ENCODE measurements at regions of chr6 and their contacts with region 1.

Region 1: DNA sequence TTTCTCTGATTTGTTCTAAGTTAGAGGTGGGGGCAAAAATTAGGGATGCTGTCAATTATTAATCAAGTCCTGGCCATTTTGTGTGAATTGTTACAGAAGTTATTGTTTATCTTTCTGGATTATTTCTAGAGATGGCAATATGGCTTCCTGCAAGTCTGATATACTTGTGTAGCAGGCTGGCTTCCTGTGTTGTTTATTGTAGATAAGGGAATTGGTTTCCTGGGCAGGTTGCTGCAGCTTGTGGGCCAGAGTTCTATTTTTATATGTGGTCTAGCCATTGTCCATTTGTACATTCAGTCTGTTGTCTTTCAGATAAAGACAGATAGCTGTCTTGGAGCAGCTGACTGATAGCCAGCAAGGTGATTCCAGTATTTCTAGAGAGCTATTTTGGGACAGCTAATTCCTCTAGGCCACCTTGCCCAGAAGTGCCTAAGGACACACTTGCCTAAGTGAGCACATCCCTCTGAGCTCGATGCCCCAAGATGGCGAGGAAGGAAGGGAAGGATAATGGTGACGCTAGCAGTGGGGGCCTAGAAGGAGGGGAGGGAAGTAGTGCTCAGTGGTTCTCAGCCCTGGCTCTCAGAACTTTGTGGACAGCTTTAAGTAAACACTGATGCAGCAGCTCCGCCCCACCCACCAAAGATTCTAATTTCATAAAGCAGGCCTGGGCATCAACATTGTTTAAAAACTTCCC is 25.5 kb downstream of the DDO start:
- DNase-seq: peak; percentile 74
- H3K4me3 ChIP-seq: no peak overlapping the region
- H3K27ac ChIP-seq: peak overlapping the region; percentile 54
- H3K4me1 ChIP-seq: peaks cover 17% of the 10 kb centered on the region
- H3K27me3 ChIP-seq: peaks cover 10 to 16% of the 10 kb centered on the region in 2 experiments
- CTCF ChIP-seq: no peak
- POLR2A ChIP-seq: no peak

Region 2: DNA sequence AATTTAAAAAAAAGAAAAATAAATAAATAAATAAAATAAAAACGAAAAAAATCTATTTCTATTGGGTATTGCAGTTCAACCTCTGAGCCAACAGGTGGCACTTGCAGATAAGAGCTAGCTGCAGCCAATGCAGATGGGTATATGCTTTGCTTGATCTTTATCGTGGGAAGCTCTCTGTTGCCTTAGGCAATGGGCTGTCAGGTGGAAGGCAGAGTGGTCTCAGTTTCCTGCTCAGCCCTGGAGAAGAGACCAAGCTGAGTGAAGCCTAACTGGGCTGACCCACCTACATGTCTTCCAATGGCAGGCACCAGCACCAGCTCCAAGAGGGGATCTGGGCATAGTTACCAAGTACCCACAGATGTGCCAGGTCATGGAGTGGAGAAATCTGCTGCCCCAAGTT is 793.8 kb before region 1 on chr6:
- CTCF ChIA-PET with region 1: interaction called, 11 read pairs
- POLR2A ChIA-PET with region 1: no interaction called
- dilution Hi-C with region 1: no loop called
- intact Hi-C with region 1: loop called (anchors 2 kb)
- DNase-seq: peak; percentile 50
- H3K4me3 ChIP-seq: no peak overlapping the region
- H3K27ac ChIP-seq: no peak overlapping the region
- H3K4me1 ChIP-seq: no peaks in the 10 kb centered on the region
- H3K27me3 ChIP-seq: no peaks in the 10 kb centered on the region
- CTCF ChIP-seq: peak in 1 of 2 donors; percentile 51
- POLR2A ChIP-seq: no peak

Region 3: DNA sequence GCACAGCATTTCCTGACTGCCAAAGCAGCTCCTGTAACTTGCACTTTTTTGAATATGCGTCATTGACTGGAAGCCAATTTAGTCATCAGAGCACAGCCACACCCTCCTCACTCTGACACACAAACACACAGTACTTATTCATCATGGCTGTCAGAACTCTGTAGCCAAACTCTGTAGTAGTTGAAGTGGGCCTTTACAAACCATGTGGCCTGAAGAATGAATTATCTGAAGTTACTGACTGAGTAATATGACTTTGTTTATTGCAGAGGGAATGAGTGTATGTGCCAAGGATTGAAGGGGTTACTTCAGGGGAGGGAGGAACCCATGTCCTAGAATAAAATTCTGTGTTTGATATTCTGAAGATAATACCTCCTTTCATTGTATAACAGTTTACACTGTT is 596.0 kb before region 1 on chr6:
- CTCF ChIA-PET with region 1: no interaction called
- POLR2A ChIA-PET with region 1: no interaction called
- dilution Hi-C with region 1: no loop called
- intact Hi-C with region 1: loop called (anchors 1 kb)
- DNase-seq: peak; percentile 93
- H3K4me3 ChIP-seq: no peak overlapping the region
- H3K27ac ChIP-seq: peak overlapping the region; percentile 75
- H3K4me1 ChIP-seq: peaks cover 38% of the 10 kb centered on the region
- H3K27me3 ChIP-seq: no peaks in the 10 kb centered on the region
- CTCF ChIP-seq: no peak
- POLR2A ChIP-seq: no peak

Region 4: DNA sequence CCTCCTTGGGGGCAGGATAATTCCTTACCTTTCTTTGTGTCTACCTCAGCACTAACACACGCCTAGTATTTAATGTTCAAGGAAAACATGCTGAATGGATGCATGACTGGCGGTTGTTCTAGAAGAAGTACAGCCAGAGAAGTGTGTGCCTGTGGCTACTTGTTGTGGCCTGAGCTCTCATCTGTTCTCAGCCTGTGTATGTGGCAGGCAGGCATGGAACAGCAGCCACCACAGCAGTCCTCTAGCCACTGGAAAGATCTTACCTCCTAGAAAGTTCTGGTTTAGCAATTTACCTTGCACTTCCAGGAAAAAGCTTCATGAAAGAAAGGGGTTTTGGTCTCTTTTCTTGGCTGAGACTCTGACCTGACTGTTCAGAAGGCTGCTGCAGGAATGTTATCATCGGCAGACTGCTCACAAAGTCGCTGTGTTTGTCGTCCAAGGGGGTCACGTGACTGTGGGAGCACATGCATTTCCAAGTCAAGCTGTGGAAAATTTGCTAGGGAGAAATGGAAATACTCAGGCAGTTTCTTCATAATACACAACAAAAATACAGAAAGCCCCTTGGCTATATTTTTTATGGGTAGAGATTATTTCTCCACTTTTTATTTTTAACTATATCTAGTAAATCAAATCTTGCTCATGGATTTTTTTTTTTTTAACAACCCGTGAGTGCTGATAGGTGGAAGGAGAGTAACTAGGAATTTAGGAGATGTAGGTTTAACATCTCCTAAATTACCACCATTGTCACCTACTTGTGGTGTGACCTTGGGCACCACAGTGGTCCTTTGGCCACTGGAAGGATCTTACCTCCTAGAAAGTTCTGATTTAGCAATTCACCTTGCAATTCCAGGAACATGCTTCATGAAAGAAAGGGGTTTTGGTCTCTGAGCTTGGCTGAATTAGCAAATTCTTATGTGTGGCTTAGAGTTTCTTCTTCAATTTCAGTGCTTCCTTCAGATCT is 522.5 kb before region 1 on chr6:
- CTCF ChIA-PET with region 1: no interaction called
- POLR2A ChIA-PET with region 1: no interaction called
- dilution Hi-C with region 1: no loop called
- intact Hi-C with region 1: no loop called
- DNase-seq: peak; percentile 5
- H3K4me3 ChIP-seq: no peak overlapping the region
- H3K27ac ChIP-seq: no peak overlapping the region
- H3K4me1 ChIP-seq: no peaks in the 10 kb centered on the region
- H3K27me3 ChIP-seq: peaks cover 4 to 5% of the 10 kb centered on the region in 2 experiments
- CTCF ChIP-seq: no peak
- POLR2A ChIP-seq: no peak

Region 5: GRCh38 chr6:109944448-109944847 is 445.4 kb before region 1 on chr6:
- CTCF ChIA-PET with region 1: no interaction called
- POLR2A ChIA-PET with region 1: no interaction called
- dilution Hi-C with region 1: no loop called
- intact Hi-C with region 1: no loop called
- DNase-seq: no peak
- H3K4me3 ChIP-seq: no peak overlapping the region
- H3K27ac ChIP-seq: no peak overlapping the region
- H3K4me1 ChIP-seq: no peaks in the 10 kb centered on the region
- H3K27me3 ChIP-seq: peaks cover 2 to 5% of the 10 kb centered on the region in 2 experiments
- CTCF ChIP-seq: no peak
- POLR2A ChIP-seq: no peak

Region 6: DNA sequence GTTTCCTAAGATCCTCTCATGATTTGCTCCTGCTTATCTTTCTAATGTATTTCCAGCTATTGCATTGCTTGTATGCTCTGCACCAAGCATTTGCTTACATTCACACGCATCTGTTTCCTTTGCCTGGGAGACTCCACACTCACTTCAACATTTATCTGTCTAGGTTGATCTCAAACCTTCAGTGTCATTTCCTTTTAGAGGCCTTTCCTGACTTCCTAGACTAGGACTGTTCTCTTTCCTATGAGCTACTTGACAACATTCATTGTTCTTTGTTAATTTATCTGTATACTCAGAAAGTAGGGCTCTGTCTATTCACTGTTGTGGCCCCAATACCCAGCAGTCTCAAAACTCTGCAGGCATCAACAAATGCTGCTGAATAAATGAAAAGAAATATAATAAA is 294.7 kb before region 1 on chr6:
- CTCF ChIA-PET with region 1: interaction called, 3 read pairs
- POLR2A ChIA-PET with region 1: no interaction called
- dilution Hi-C with region 1: no loop called
- intact Hi-C with region 1: loop called (anchors 1 kb)
- DNase-seq: peak; percentile 93
- H3K4me3 ChIP-seq: no peak overlapping the region
- H3K27ac ChIP-seq: peak overlapping the region; percentile 80
- H3K4me1 ChIP-seq: peaks cover 36% of the 10 kb centered on the region
- H3K27me3 ChIP-seq: no peaks in the 10 kb centered on the region
- CTCF ChIP-seq: no peak
- POLR2A ChIP-seq: no peak

Region 7: GRCh38 chr6:110528101-110528929 is 138.5 kb after region 1 on chr6:
- CTCF ChIA-PET with region 1: no interaction called
- POLR2A ChIA-PET with region 1: no interaction called
- dilution Hi-C with region 1: no loop called
- intact Hi-C with region 1: no loop called
- DNase-seq: peak; percentile 91
- H3K4me3 ChIP-seq: no peak overlapping the region
- H3K27ac ChIP-seq: peak overlapping the region; percentile 54
- H3K4me1 ChIP-seq: peaks cover 27% of the 10 kb centered on the region
- H3K27me3 ChIP-seq: peaks cover 29 to 30% of the 10 kb centered on the region in 2 experiments
- CTCF ChIP-seq: peak; percentile 45 to 68
- POLR2A ChIP-seq: no peak